Panc1 (cell line): ENCODE measurements at regions of chr22 and their contacts with region 1.

Region 1: GRCh38 chr22:50445071-50445879 is 29.6 kb downstream of the SBF1 start:
- DNase-seq: no peak
- ATAC-seq: peak; percentile 27
- H3K4me3 ChIP-seq: no peak overlapping the region
- H3K27ac ChIP-seq: peak overlapping the region; percentile 70
- H3K4me1 ChIP-seq: peaks cover 22% of the 10 kb centered on the region
- H3K27me3 ChIP-seq: no peaks in the 10 kb centered on the region
- CTCF ChIP-seq: no peak

Region 2: GRCh38 chr22:50399751-50400331 is 45.4 kb before region 1 on chr22:
- CTCF ChIA-PET with region 1: no interaction called
- POLR2A ChIA-PET with region 1: interaction called, 20 read pairs
- in situ Hi-C with region 1: no loop called
- intact Hi-C with region 1: no loop called
- DNase-seq: no peak
- ATAC-seq: peak; percentile 83
- H3K4me3 ChIP-seq: no peak overlapping the region
- H3K27ac ChIP-seq: no peak overlapping the region
- H3K4me1 ChIP-seq: peaks cover 12% of the 10 kb centered on the region
- H3K27me3 ChIP-seq: no peaks in the 10 kb centered on the region
- CTCF ChIP-seq: no peak; the same call in 1 of the 2 replicates

Region 3: GRCh38 chr22:50481440-50482106 is 36.3 kb after region 1 on chr22 and contains the start of gene ADM2:
- CTCF ChIA-PET with region 1: no interaction called
- POLR2A ChIA-PET with region 1: no interaction called
- in situ Hi-C with region 1: no loop called
- intact Hi-C with region 1: no loop called
- DNase-seq: no peak
- ATAC-seq: peak; percentile 69
- H3K4me3 ChIP-seq: peak within 1 kb of the TSS; percentile 57 to 72
- H3K27ac ChIP-seq: peak within 1 kb of the TSS; percentile 63; the same call in 1 of the 2 replicates
- H3K4me1 ChIP-seq: peaks cover 13% of the 10 kb centered on the region
- H3K27me3 ChIP-seq: no peaks in the 10 kb centered on the region
- CTCF ChIP-seq: no peak
- total RNA-seq, gene ADM2: 3.9 TPM

Region 4: GRCh38 chr22:50674606-50675549 is 229.6 kb after region 1 on chr22:
- CTCF ChIA-PET with region 1: no interaction called
- POLR2A ChIA-PET with region 1: no interaction called
- in situ Hi-C with region 1: no loop called
- intact Hi-C with region 1: no loop called
- DNase-seq: no peak
- ATAC-seq: peak; percentile 78
- H3K4me3 ChIP-seq: peak overlapping the region; percentile 42 to 47
- H3K27ac ChIP-seq: no peak overlapping the region
- H3K4me1 ChIP-seq: no peaks in the 10 kb centered on the region; the same call in 1 of the 2 replicates
- H3K27me3 ChIP-seq: no peaks in the 10 kb centered on the region
- CTCF ChIP-seq: no peak